MCF 10A (cell line): ENCODE measurements at regions of chrX and their contacts with region 1.

Region 1: DNA sequence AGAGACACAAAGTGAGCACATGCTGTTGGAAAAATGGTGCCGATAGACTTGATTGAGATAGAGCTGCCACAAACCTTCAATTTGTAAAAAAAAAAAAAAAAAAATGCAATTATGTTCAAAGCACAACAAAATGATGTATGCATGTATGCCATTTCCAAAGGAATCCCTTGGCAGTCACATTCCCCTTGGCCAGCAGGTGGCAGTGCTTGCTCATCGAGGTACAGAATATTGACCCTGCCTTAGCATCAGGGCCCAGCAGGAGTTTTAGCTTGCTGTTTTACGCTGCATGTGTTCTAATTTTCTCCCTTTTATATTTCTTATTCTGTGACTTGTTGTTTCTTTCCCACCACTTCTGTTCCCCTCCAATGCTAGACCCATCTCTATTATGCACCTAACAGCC is 34.5 kb upstream of the CYBB start:
- DNase-seq: peak; percentile 73
- H3K4me3 Mint-ChIP-seq: no peak overlapping the region
- H3K27ac Mint-ChIP-seq: no peak overlapping the region
- H3K4me1 Mint-ChIP-seq: no peaks in the 10 kb centered on the region
- H3K27me3 Mint-ChIP-seq: peaks cover 56% of the 10 kb centered on the region
- CTCF ChIP-seq: peak; percentile 75

Region 2: DNA sequence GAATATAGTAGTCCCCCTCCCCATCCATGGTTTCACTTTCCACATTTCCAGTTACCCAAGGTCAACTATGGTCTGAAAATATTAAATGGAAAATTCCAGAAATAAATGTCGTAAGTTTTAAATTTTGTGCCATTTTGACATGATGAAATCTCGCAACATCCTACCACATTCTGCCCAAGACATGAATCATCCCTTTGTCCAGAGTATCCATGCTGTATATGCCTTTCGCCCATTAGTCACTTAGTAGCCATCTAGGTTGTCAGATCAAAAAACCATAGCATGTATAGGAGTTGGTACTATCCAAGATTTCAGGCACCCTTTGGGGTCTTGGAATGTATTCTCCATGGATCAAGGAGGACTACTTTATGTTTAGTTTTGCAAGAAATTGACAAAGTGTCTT is 387.9 kb before region 1 on chrX:
- CTCF ChIA-PET with region 1: no interaction called
- POLR2A ChIA-PET with region 1: no interaction called
- intact Hi-C with region 1: no loop called
- DNase-seq: peak; percentile 32
- H3K4me3 Mint-ChIP-seq: no peak overlapping the region
- H3K27ac Mint-ChIP-seq: no peak overlapping the region
- H3K4me1 Mint-ChIP-seq: peaks cover 26% of the 10 kb centered on the region
- H3K27me3 Mint-ChIP-seq: peaks cover 57% of the 10 kb centered on the region
- CTCF ChIP-seq: no peak

Region 3: GRCh38 chrX:37509349-37509748 is 236.0 kb before region 1 on chrX:
- CTCF ChIA-PET with region 1: interaction called, 7 read pairs
- POLR2A ChIA-PET with region 1: no interaction called
- intact Hi-C with region 1: loop called (anchors 1 kb)
- DNase-seq: peak; percentile 22
- H3K4me3 Mint-ChIP-seq: no peak overlapping the region
- H3K27ac Mint-ChIP-seq: no peak overlapping the region
- H3K4me1 Mint-ChIP-seq: no peaks in the 10 kb centered on the region
- H3K27me3 Mint-ChIP-seq: peaks cover 80% of the 10 kb centered on the region
- CTCF ChIP-seq: peak; percentile 53

Region 4: DNA sequence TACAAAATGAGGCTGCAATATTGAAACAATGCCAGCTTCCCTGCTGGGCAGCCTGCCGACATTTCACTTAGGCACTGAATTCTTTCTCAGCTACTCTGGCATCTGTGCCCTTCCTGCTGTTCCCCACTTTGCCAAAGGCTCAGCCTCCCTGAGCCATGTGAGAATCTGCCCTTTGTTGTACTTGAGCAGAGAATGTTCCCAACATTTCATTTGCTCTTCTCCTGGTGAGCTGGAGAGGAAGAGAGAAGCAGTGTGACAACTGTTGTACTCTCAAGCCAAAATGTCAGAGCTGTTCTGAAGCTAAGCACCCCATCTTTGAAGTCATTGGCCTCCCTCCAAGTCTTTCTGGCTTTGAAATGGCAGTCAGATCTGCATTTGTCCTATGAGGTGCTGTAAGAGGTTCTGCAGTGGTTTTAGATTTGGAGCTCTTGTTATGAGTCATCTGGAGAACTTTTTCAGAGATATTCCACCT is 141.4 kb before region 1 on chrX:
- CTCF ChIA-PET with region 1: no interaction called
- POLR2A ChIA-PET with region 1: no interaction called
- intact Hi-C with region 1: no loop called
- DNase-seq: peak; percentile 43
- H3K4me3 Mint-ChIP-seq: no peak overlapping the region
- H3K27ac Mint-ChIP-seq: peak overlapping the region; percentile 39
- H3K4me1 Mint-ChIP-seq: peaks cover 20% of the 10 kb centered on the region
- H3K27me3 Mint-ChIP-seq: peaks cover 80% of the 10 kb centered on the region
- CTCF ChIP-seq: no peak

Region 5: GRCh38 chrX:37783305-37783704 is 38.0 kb after region 1 on chrX:
- CTCF ChIA-PET with region 1: interaction called, 13 read pairs
- POLR2A ChIA-PET with region 1: no interaction called
- intact Hi-C with region 1: no loop called
- DNase-seq: no peak
- H3K4me3 Mint-ChIP-seq: no peak overlapping the region
- H3K27ac Mint-ChIP-seq: no peak overlapping the region
- H3K4me1 Mint-ChIP-seq: no peaks in the 10 kb centered on the region
- H3K27me3 Mint-ChIP-seq: peaks cover 55% of the 10 kb centered on the region
- CTCF ChIP-seq: no peak

Region 6: GRCh38 chrX:37803057-37803456 is 57.7 kb after region 1 on chrX:
- CTCF ChIA-PET with region 1: no interaction called
- POLR2A ChIA-PET with region 1: no interaction called
- intact Hi-C with region 1: no loop called
- DNase-seq: no peak
- H3K4me3 Mint-ChIP-seq: no peak overlapping the region
- H3K27ac Mint-ChIP-seq: no peak overlapping the region
- H3K4me1 Mint-ChIP-seq: no peaks in the 10 kb centered on the region
- H3K27me3 Mint-ChIP-seq: peaks cover 45% of the 10 kb centered on the region
- CTCF ChIP-seq: no peak

Region 7: GRCh38 chrX:37926700-37927099 is 181.3 kb after region 1 on chrX:
- CTCF ChIA-PET with region 1: no interaction called
- POLR2A ChIA-PET with region 1: no interaction called
- intact Hi-C with region 1: loop called (anchors 1 kb)
- DNase-seq: peak; percentile 45
- H3K4me3 Mint-ChIP-seq: no peak overlapping the region
- H3K27ac Mint-ChIP-seq: no peak overlapping the region
- H3K4me1 Mint-ChIP-seq: no peaks in the 10 kb centered on the region
- H3K27me3 Mint-ChIP-seq: peaks cover 46% of the 10 kb centered on the region
- CTCF ChIP-seq: peak; percentile 52

Region 8: DNA sequence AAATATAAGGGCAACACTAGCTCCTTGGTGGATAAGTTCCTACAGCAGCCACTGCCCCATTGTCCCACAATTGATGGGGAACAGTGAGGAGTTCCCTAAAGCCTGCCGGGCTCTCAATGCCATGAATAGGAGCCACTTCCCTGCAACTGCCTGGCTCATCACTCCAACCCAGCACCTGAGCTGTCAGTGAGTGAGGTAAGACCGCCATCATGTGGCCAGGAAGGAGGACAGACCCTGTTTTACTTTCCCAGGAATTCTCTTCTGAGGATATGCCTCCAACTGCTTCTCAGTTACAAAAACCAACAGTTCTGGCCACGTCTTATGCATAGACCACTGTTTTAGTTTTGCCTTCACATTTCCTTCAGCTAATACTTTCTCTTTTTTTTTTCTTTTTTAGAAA is 429.8 kb after region 1 on chrX:
- CTCF ChIA-PET with region 1: interaction called, 11 read pairs
- POLR2A ChIA-PET with region 1: no interaction called
- intact Hi-C with region 1: loop called (anchors 1 kb)
- DNase-seq: peak; percentile 62
- H3K4me3 Mint-ChIP-seq: no peak overlapping the region
- H3K27ac Mint-ChIP-seq: peak overlapping the region; percentile 47
- H3K4me1 Mint-ChIP-seq: no peaks in the 10 kb centered on the region
- H3K27me3 Mint-ChIP-seq: peaks cover 59% of the 10 kb centered on the region
- CTCF ChIP-seq: peak; percentile 82